Activated naive CD4-positive, alpha-beta T cell treated with anti-CD3 and anti-CD28 coated beads for 36 hours (primary cell): ENCODE measurements at regions of chr6 and their contacts with region 1.

Region 1: DNA sequence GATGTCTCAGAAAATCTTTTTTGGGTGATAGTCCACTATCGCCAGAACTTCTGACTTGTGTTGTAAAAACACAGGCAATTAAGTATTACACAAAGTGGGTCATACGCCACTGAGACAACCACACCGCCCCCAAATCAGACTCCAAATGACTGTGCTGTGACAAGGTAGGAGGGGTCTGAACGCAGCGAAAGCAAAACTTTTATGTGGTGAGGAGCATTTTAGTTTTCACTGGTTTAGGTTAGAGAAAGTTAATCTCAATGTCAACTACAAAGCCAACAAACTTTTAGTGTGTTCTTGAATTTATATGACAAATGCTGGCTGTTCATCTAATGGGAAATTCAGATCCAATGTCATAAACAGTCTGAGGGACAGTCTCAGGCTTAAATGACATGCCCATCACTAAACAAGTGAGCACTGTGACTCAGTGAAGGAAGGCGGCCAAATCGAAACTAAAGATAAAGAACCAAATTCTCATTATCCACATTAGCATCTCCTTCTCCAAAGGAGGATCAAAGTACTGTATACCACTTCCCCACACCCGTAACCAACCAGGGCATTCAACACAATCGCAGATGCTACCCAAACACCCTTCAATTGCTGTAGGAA is 186.7 kb downstream of the GJA10 start:
- DNase-seq: peak; percentile 94
- H3K4me3 Mint-ChIP-seq: peak overlapping the region; percentile 89
- H3K27ac Mint-ChIP-seq: peak overlapping the region; percentile 94
- H3K4me1 Mint-ChIP-seq: peaks cover 88% of the 10 kb centered on the region
- H3K27me3 Mint-ChIP-seq: no peaks in the 10 kb centered on the region

Region 2: DNA sequence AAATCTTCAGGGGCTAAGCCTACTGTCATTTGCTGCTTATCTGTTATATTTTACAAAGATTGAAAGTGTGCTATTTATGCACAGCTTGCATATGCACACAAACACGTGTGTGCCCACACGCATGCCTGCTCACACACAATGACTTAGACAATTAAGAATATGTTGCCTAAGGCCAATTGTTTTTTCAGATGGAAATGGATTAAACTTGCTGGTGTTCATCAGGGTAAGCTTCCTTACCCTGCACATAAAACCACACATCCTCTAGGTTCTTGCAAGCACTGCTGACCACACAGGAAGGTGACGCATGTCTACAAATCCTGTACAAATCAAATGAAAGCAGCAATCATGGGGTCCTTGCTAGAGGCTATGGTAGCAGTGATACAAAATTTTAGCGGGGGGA is 128.3 kb before region 1 on chr6:
- CTCF ChIA-PET with region 1: interaction called, 3 read pairs
- intact Hi-C with region 1: loop called (anchors 1 kb)
- DNase-seq: peak; percentile 70
- H3K4me3 Mint-ChIP-seq: no peak overlapping the region
- H3K27ac Mint-ChIP-seq: peak overlapping the region; percentile 75
- H3K4me1 Mint-ChIP-seq: peaks cover 74% of the 10 kb centered on the region
- H3K27me3 Mint-ChIP-seq: no peaks in the 10 kb centered on the region

Region 3: GRCh38 chr6:90068264-90068663 is 12.7 kb before region 1 on chr6:
- CTCF ChIA-PET with region 1: interaction called, 5 read pairs
- intact Hi-C with region 1: loop called (anchors 1 kb)
- DNase-seq: peak; percentile 75
- H3K4me3 Mint-ChIP-seq: no peak overlapping the region
- H3K27ac Mint-ChIP-seq: peak overlapping the region; percentile 87
- H3K4me1 Mint-ChIP-seq: peaks cover 88% of the 10 kb centered on the region
- H3K27me3 Mint-ChIP-seq: no peaks in the 10 kb centered on the region

Region 4: GRCh38 chr6:90144396-90144795 is 63.4 kb after region 1 on chr6:
- CTCF ChIA-PET with region 1: interaction called, 6 read pairs
- intact Hi-C with region 1: loop called (anchors 1 kb)
- DNase-seq: peak; percentile 84
- H3K4me3 Mint-ChIP-seq: peak overlapping the region; percentile 49
- H3K27ac Mint-ChIP-seq: peak overlapping the region; percentile 91
- H3K4me1 Mint-ChIP-seq: peaks cover 88% of the 10 kb centered on the region
- H3K27me3 Mint-ChIP-seq: no peaks in the 10 kb centered on the region

Region 5: DNA sequence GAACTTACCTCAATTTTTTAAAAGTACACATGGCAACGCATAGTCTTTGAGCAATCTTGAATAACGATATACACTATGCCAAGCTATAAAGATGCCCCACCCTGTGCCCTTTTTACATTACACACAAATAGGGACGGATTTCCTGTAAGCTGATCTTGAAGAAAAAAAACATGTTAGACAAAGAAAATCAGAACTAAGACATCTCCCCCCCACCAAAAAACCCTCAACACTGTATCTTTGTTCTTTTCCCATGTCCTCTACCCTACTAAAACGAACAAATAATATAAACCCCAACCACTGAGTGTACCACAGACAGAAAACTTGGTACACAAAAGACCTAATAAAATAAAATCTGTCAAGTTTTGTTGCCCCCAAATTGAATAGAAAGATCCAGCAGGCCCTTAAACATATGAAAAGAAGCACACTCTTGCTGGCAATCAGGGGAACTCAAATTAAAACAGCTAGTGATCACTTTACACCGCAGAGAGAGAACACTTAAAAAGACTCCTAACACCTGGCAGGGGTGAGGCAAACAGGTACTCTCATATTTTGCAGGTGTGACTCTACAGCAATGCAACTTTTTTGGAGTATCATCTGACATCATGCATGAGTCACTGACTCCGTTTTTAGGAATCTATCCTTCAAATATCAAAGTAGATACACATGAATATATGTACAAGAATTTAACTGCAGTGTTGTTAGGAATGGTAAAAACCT is 186.1 kb after region 1 on chr6:
- CTCF ChIA-PET with region 1: interaction called, 4 read pairs
- intact Hi-C with region 1: loop called (anchors 1 kb)
- DNase-seq: peak; percentile 78
- H3K4me3 Mint-ChIP-seq: peak overlapping the region; percentile 45
- H3K27ac Mint-ChIP-seq: peak overlapping the region; percentile 96
- H3K4me1 Mint-ChIP-seq: peaks cover 92% of the 10 kb centered on the region
- H3K27me3 Mint-ChIP-seq: no peaks in the 10 kb centered on the region

Region 6: DNA sequence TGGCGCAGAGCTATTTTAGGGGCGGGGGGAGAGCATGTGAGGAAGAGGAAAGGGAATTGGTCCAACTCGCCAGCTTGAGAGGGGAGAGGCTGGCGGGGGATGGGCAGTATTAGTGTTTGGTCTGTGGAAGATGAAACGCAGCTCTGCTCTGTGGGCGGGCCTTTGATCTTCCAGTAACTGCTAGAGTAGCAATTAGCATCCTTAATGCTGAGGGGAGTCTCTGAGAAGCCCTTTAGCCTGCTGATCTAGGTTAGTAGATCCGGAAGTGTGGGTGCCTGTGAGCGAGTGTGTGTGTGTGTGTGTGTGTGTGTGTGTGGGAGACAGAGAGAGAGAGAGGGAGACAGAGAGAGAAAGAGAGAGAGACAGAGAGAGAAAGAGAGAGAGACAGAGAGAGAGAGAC is 332.9 kb after region 1 on chr6:
- CTCF ChIA-PET with region 1: no interaction called
- intact Hi-C with region 1: loop called (anchors 1 kb)
- DNase-seq: peak; percentile 96
- H3K4me3 Mint-ChIP-seq: peak overlapping the region; percentile 71
- H3K27ac Mint-ChIP-seq: peak overlapping the region; percentile 94
- H3K4me1 Mint-ChIP-seq: peaks cover 69% of the 10 kb centered on the region
- H3K27me3 Mint-ChIP-seq: no peaks in the 10 kb centered on the region

Region 7: GRCh38 chr6:90656325-90656724 is 575.3 kb after region 1 on chr6:
- CTCF ChIA-PET with region 1: no interaction called
- intact Hi-C with region 1: no loop called
- DNase-seq: no peak
- H3K4me3 Mint-ChIP-seq: no peak overlapping the region
- H3K27ac Mint-ChIP-seq: no peak overlapping the region
- H3K4me1 Mint-ChIP-seq: no peaks in the 10 kb centered on the region
- H3K27me3 Mint-ChIP-seq: peaks cover 8% of the 10 kb centered on the region